Calu3 (cell line): ENCODE measurements at regions of chr14 and their contacts with region 1.

Region 1: GRCh38 chr14:70622111-70622712 is 19.5 kb upstream of the TTC9 start:
- DNase-seq: peak; percentile 67
- H3K4me3 Mint-ChIP-seq: no peak overlapping the region
- H3K27ac Mint-ChIP-seq: peak overlapping the region; percentile 58
- H3K4me1 Mint-ChIP-seq: peaks cover 38% of the 10 kb centered on the region
- H3K27me3 Mint-ChIP-seq: no peaks in the 10 kb centered on the region
- CTCF ChIP-seq: peak; percentile 70

Region 2: GRCh38 chr14:70821584-70822529 is 199.6 kb after region 1 on chr14:
- CTCF ChIA-PET with region 1: no interaction called
- intact Hi-C with region 1: loop called (anchors 1 kb)
- DNase-seq: peak; percentile 36
- H3K4me3 Mint-ChIP-seq: peak overlapping the region; percentile 70
- H3K27ac Mint-ChIP-seq: no peak overlapping the region
- H3K4me1 Mint-ChIP-seq: peaks cover 9% of the 10 kb centered on the region
- H3K27me3 Mint-ChIP-seq: peaks cover 37% of the 10 kb centered on the region
- CTCF ChIP-seq: no peak

Region 3: GRCh38 chr14:70981000-70981952 is 359.1 kb after region 1 on chr14:
- CTCF ChIA-PET with region 1: no interaction called
- intact Hi-C with region 1: loop called (anchors 10 kb)
- DNase-seq: no peak
- H3K4me3 Mint-ChIP-seq: no peak overlapping the region
- H3K27ac Mint-ChIP-seq: no peak overlapping the region
- H3K4me1 Mint-ChIP-seq: no peaks in the 10 kb centered on the region
- H3K27me3 Mint-ChIP-seq: no peaks in the 10 kb centered on the region
- CTCF ChIP-seq: no peak